Activated CD4-positive, alpha-beta T cell treated with anti-CD3 and anti-CD28 coated beads for 36 hours (primary cell): ENCODE measurements at regions of chr6 and their contacts with region 1.

Region 1: GRCh38 chr6:45714741-45715507 is 300.7 kb downstream of the CLIC5 start:
- DNase-seq: peak; percentile 57
- ATAC-seq: peak; percentile 43
- H3K4me3 Mint-ChIP-seq: peak overlapping the region; percentile 24
- H3K27ac Mint-ChIP-seq: peak overlapping the region; percentile 89
- H3K4me1 Mint-ChIP-seq: peaks cover 48% of the 10 kb centered on the region
- H3K27me3 Mint-ChIP-seq: peaks cover 2% of the 10 kb centered on the region

Region 2: GRCh38 chr6:44275749-44276648 is 1438.9 kb before region 1 on chr6:
- CTCF ChIA-PET with region 1: no interaction called
- POLR2A ChIA-PET with region 1: no interaction called
- intact Hi-C with region 1: no loop called
- DNase-seq: peak; percentile 54
- ATAC-seq: peak; percentile 75
- H3K4me3 Mint-ChIP-seq: no peak overlapping the region
- H3K27ac Mint-ChIP-seq: no peak overlapping the region
- H3K4me1 Mint-ChIP-seq: no peaks in the 10 kb centered on the region
- H3K27me3 Mint-ChIP-seq: peaks cover 50% of the 10 kb centered on the region

Region 3: GRCh38 chr6:44475779-44476434 is 1239.0 kb before region 1 on chr6:
- CTCF ChIA-PET with region 1: interaction called, 8 read pairs
- POLR2A ChIA-PET with region 1: no interaction called
- intact Hi-C with region 1: loop called in 1 of 2 experiments (anchors 2 kb)
- DNase-seq: peak; percentile 86
- ATAC-seq: peak; percentile 94
- H3K4me3 Mint-ChIP-seq: no peak overlapping the region
- H3K27ac Mint-ChIP-seq: no peak overlapping the region
- H3K4me1 Mint-ChIP-seq: no peaks in the 10 kb centered on the region
- H3K27me3 Mint-ChIP-seq: no peaks in the 10 kb centered on the region

Region 4: DNA sequence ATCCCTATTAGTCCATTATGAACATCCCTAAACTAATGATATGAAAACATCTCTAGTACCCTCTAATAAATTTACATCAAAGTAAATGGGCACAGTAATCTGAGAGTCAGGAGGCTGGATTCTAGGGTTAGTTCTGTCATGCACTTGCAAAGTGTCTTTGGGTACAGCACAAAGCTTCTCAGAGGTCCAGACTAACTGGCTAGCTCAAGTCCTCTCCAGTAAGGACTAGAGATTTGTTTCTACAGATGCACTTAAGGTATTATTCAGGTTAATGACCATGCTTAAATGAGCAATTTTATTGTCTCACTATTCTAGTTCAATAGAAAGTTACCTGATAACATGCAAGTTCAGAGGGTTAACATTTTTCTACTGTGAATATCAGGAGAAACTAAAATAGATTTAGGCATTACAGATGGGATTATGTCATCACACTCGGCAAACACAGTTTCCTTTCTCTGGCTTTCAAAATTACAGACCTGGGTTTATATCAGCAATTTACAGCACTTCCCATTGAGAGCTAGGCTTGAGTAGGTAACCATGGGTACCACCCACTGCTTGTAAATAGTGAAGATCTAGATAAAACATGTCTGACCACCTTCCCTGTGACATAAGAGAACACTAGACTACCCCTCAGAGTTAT is 789.7 kb before region 1 on chr6:
- CTCF ChIA-PET with region 1: no interaction called
- POLR2A ChIA-PET with region 1: no interaction called
- intact Hi-C with region 1: loop called (anchors 10 kb)
- DNase-seq: peak; percentile 22
- ATAC-seq: peak; percentile 76
- H3K4me3 Mint-ChIP-seq: no peak overlapping the region
- H3K27ac Mint-ChIP-seq: peak overlapping the region; percentile 13
- H3K4me1 Mint-ChIP-seq: peaks cover 49% of the 10 kb centered on the region
- H3K27me3 Mint-ChIP-seq: no peaks in the 10 kb centered on the region

Region 5: DNA sequence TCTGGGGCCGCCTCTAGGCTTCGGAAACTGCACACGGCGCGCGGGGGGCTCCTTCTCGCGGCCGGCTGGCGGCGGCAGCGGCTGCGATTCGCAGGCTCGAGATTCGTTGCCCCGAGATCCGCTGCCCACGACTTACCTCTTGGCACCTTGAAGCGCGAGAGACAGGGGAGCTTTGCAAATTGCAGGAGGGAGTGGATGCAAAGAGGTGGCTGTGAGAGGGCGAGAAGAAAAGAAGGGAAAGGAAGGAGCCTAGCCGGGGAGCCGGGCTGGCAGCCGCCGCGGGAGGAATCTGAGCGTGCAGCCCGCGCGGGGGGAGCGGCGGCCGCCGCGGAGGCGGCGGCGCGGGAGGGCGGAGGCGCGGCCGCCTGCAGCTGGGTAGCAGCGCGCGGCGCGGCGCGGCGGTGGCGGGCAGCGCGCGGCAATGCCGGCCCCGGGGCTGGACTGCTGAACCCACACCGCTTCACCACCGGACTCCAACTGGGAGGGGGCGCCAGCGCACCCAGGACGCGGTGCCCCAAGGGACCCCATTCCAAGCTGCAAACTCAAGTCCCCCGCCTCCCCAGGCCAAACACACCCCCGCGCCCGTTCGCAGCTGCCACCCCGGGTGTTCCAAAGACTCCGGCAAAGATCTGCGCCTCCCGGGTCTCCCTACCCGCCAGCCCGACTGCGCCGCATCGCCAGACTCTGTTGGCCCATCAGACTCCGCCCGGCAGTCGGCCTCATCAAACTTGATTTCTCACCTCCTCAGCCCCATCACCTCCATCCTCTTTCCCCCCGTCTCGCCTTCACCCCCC is 293.0 kb before region 1 on chr6:
- CTCF ChIA-PET with region 1: interaction called, 6 read pairs
- POLR2A ChIA-PET with region 1: no interaction called
- intact Hi-C with region 1: loop called (anchors 1 to 2 kb)
- DNase-seq: peak; percentile 75
- ATAC-seq: peak; percentile 23
- H3K4me3 Mint-ChIP-seq: peak overlapping the region; percentile 90
- H3K27ac Mint-ChIP-seq: peak overlapping the region; percentile 94
- H3K4me1 Mint-ChIP-seq: peaks cover 36% of the 10 kb centered on the region
- H3K27me3 Mint-ChIP-seq: peaks cover 11% of the 10 kb centered on the region

Region 6: GRCh38 chr6:45558858-45559257 is 156.1 kb before region 1 on chr6:
- CTCF ChIA-PET with region 1: no interaction called
- POLR2A ChIA-PET with region 1: no interaction called
- intact Hi-C with region 1: loop called in 1 of 2 experiments (anchors 1 kb)
- DNase-seq: no peak
- ATAC-seq: peak; percentile 90
- H3K4me3 Mint-ChIP-seq: peak overlapping the region; percentile 54
- H3K27ac Mint-ChIP-seq: peak overlapping the region; percentile 82
- H3K4me1 Mint-ChIP-seq: peaks cover 32% of the 10 kb centered on the region
- H3K27me3 Mint-ChIP-seq: peaks cover 3% of the 10 kb centered on the region

Region 7: GRCh38 chr6:45703041-45703739 is 11.7 kb before region 1 on chr6:
- CTCF ChIA-PET with region 1: interaction called, 11 read pairs
- POLR2A ChIA-PET with region 1: no interaction called
- intact Hi-C with region 1: no loop called
- DNase-seq: no peak
- ATAC-seq: peak; percentile 63
- H3K4me3 Mint-ChIP-seq: no peak overlapping the region
- H3K27ac Mint-ChIP-seq: peak overlapping the region; percentile 76
- H3K4me1 Mint-ChIP-seq: peaks cover 21% of the 10 kb centered on the region
- H3K27me3 Mint-ChIP-seq: no peaks in the 10 kb centered on the region

Region 8: GRCh38 chr6:45746046-45746445 is 31.1 kb after region 1 on chr6:
- CTCF ChIA-PET with region 1: no interaction called
- POLR2A ChIA-PET with region 1: no interaction called
- intact Hi-C with region 1: no loop called
- DNase-seq: no peak
- ATAC-seq: no peak
- H3K4me3 Mint-ChIP-seq: no peak overlapping the region
- H3K27ac Mint-ChIP-seq: no peak overlapping the region
- H3K4me1 Mint-ChIP-seq: peaks cover 12% of the 10 kb centered on the region
- H3K27me3 Mint-ChIP-seq: peaks cover 4% of the 10 kb centered on the region

Region 9: DNA sequence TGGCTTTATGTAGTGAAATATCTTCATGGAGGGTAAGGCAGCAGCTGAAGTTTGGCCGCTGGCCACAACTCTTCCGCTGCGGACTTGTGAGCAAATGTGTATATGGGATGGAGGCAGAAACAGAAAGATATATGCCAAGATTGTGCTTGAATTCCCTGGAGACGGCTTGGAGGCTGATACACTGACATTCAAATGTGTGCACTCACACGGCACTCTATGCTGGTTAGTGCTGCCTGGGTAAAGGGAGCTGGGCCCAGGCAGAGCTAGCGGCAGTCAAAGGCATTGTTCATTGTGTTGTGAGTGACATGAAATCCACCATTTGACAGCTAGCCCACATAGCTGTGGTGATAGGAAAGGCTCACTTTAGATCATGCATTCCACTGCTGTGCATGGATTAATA is 98.0 kb after region 1 on chr6:
- CTCF ChIA-PET with region 1: no interaction called
- POLR2A ChIA-PET with region 1: no interaction called
- intact Hi-C with region 1: no loop called
- DNase-seq: no peak
- ATAC-seq: no peak
- H3K4me3 Mint-ChIP-seq: no peak overlapping the region
- H3K27ac Mint-ChIP-seq: no peak overlapping the region
- H3K4me1 Mint-ChIP-seq: peaks cover 18% of the 10 kb centered on the region
- H3K27me3 Mint-ChIP-seq: peaks cover 5% of the 10 kb centered on the region

Region 10: DNA sequence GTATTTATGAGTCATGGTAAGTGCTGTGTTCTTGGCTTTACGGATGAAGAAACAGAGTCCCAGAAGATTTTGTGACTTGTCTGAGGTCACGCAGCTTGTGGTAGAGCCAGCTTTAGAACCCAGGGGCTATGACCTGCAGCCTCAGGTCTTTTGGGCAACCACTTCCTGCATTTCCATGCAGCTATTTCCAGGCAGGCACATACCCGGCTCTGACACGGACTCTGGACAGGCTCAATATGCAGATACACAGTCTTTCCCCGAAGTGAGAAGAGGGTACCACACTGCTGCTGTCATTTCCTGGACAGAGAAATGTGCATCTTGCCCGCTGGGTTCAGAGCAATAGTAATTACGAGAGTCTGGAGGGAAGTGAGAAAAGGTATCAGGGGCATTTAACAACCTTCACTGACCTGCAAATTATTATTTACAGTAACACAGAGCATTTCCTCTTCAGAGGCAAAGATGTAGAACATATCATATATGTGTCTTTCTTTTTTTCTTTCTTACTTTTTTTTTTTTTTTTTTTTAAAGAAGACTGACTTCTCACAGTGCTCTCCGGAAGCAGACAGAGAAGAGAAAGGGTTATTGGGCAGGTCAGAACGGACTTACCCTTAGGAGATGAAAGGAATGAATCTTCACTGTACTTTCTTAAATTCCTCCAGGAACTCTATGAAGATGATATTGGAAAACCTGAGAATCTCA is 115.7 kb after region 1 on chr6:
- CTCF ChIA-PET with region 1: interaction called, 3 read pairs
- POLR2A ChIA-PET with region 1: interaction called, 3 read pairs
- intact Hi-C with region 1: loop called (anchors 1 kb)
- DNase-seq: peak; percentile 79
- ATAC-seq: peak; percentile 79
- H3K4me3 Mint-ChIP-seq: peak overlapping the region; percentile 63
- H3K27ac Mint-ChIP-seq: peak overlapping the region; percentile 93
- H3K4me1 Mint-ChIP-seq: peaks cover 46% of the 10 kb centered on the region
- H3K27me3 Mint-ChIP-seq: peaks cover 4% of the 10 kb centered on the region

Region 11: DNA sequence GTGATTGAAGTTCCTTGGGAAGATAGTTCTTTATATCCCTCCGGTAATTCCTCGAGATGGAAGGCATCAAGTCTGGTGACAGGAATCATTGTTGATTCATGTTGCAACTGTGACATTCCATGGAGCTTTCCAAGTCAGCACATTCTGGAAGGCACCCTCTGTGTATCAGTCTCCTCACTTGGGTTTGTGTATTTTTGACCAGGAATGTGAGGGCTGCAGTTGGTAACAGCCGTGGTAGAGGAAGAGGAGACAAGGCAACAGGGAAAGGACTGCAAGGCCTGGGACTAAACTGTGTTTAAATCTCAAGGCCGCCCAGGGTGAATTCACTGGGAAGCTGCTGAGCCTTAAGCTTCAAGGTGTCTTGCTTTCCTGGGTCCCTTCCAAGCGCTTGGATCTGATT is 201.8 kb after region 1 on chr6:
- CTCF ChIA-PET with region 1: no interaction called
- POLR2A ChIA-PET with region 1: no interaction called
- intact Hi-C with region 1: no loop called
- DNase-seq: no peak
- ATAC-seq: no peak
- H3K4me3 Mint-ChIP-seq: no peak overlapping the region
- H3K27ac Mint-ChIP-seq: no peak overlapping the region
- H3K4me1 Mint-ChIP-seq: peaks cover 18% of the 10 kb centered on the region
- H3K27me3 Mint-ChIP-seq: no peaks in the 10 kb centered on the region